ENCODE measurements at regions of chr2 and their contacts with region 1.

Region 1: GRCh38 chr2:61993444-61994024 is 88.1 kb downstream of the COMMD1 start:
- DNase-seq: peak in 2 of 10 donors; percentile 41 to 58
- H3K4me3 ChIP-seq: no peak overlapping the region
- H3K27ac ChIP-seq: no peak overlapping the region
- H3K27me3 ChIP-seq: no peaks in the 10 kb centered on the region
- CTCF ChIP-seq: peak; percentile 18 to 80 (median 67)

Region 2: GRCh38 chr2:61816480-61817355 is 176.8 kb before region 1 on chr2:
- intact Hi-C with region 1: no loop called
- DNase-seq: no peak
- H3K4me3 ChIP-seq: no peak overlapping the region
- H3K27ac ChIP-seq: peak overlapping the region in 1 of 59 donors; percentile 18
- H3K27me3 ChIP-seq: no peaks in the 10 kb centered on the region
- CTCF ChIP-seq: no peak

Region 3: GRCh38 chr2:61888267-61889055 is 105.1 kb before region 1 on chr2 and contains the start of gene CCT4:
- intact Hi-C with region 1: no loop called
- DNase-seq: peak; percentile 79 to 91 (median 86)
- H3K4me3 ChIP-seq: peak within 1 kb of the TSS; percentile 65 to 98 (median 89)
- H3K27ac ChIP-seq: peak within 1 kb of the TSS; percentile 92 to 100 (median 99)
- H3K27me3 ChIP-seq: no peaks in the 10 kb centered on the region
- CTCF ChIP-seq: peak in 22 of 56 donors; percentile 5 to 46 (median 18)
- total RNA-seq, gene CCT4: 56.8 to 160 (median 105) TPM

Region 4: DNA sequence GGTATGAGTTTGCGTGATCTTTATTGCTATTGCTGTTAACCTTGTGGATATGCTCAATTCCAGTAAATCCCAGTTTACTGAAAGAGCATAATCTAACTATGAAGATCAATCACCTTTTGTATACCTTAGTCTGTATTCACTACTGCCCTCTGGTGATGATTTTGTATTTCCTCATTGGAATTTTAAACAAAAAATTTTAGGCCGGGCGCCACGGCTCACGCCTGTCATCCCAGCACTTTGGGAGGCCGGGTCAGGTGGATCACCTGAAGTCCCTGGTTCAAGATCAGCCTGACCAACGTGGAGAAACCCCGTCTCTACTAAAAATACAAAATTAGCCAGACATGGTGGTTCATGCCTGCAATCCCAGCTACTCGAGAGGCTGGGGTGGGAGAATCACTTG is 82.9 kb before region 1 on chr2:
- intact Hi-C with region 1: loop called in 1 of 2 experiments (anchors 10 kb)
- DNase-seq: no peak
- H3K4me3 ChIP-seq: no peak overlapping the region
- H3K27ac ChIP-seq: no peak overlapping the region
- H3K27me3 ChIP-seq: no peaks in the 10 kb centered on the region
- CTCF ChIP-seq: peak in 32 of 56 donors; percentile 9 to 40 (median 23)

Region 5: DNA sequence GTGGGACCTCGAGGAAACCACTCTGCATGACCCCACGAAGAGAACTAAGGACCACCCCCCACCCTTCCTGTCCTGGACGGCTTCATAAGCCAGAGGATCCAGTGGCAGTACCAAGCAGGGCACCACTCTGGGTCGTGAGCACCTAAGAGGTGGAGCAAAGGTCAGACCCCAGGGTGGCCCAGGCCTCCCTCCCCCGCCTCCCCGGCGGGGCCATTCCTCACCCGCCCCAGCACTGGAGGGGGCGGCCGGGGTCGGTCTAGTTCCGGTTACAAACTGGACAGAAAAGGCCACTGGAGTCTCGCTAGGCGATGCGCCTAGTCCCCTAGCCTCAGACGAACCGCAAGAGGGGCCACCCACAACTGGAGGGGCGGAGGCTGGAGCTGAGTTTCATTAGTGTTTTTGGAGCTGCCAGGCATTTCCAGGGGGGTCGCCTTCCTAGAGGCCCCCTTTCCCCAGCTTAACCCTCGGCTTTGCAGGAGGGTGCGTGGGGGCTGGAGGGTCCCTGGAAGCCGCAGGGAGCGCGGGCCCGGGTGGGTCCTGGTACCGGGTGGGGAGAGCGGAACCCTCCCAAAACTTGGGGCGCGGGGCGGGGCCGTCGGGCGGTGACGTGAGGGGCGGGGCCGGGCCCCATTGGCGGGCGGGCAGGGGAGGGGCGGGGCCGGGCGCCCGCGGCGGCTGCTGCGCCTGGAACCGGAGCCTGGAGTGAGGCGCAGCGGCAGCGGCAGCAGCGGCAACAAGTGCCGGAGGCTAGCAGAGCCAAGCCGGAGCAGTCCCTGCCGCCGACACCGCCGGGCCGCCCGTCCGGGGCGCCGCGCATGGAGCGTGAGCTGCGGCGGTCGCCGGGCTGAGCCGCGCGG is 202.1 kb after region 1 on chr2 and contains the start of gene B3GNT2:
- intact Hi-C with region 1: loop called in 1 of 2 experiments (anchors 10 kb)
- DNase-seq: peak; percentile 37 to 87 (median 69)
- H3K4me3 ChIP-seq: peak within 1 kb of the TSS; percentile 60 to 98 (median 91)
- H3K27ac ChIP-seq: peak within 1 kb of the TSS; percentile 29 to 96 (median 89)
- H3K27me3 ChIP-seq: no peaks in the 10 kb centered on the region
- CTCF ChIP-seq: peak in 3 of 56 donors; percentile 0 to 19 (median 12)
- total RNA-seq, gene B3GNT2: 7.7 to 20.6 (median 12.6) TPM

Measured in dorsolateral prefrontal cortex (tissue), 120 donors.